GM12878 (cell line): ENCODE measurements at regions of chr13 and their contacts with region 1.

Region 1: DNA sequence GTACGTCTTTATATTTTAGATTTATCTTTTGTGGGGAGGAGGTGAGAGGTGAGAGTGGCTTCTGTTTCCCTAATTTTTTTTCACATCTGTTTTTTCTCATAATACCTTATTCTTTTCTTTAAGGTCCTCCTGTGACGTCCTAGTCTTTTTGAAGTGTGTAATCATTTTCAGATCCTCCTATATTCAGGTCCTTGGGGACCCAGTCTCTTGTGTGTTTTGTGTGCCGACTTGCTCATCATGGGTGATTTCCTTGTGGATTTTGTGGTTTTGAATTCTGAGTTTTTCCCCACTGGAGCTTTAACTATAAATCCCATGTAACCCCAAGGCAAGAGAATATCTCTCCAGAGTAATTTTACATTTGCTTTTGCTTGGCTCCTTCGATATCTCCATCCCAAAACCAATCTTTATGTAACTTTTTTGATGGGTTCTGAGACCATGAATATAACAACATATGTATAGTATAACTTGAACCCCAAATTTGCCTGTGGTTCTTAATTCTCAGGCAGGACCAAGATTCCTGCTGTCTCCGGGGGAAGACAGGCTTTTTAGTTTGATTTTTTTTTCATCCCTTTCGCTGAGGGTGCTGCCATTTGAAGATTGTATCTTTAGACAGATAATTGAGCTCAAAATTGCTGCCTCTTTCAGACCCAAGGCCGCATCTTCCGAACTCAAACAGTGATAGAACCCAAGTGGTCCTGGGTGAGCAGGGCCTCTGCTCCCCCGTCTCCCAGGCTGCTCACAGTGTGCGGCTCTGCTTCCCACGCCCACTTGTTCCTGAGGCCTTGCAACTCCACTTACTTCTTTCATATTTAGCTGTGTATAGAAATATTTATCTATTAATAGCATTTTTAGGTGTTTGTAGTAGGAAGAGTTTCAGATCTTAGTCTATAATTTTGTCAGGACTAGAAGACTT is 59.1 kb upstream of the GPR183 start:
- DNase-seq: peak; percentile 87
- ATAC-seq: peak; percentile 67
- H3K4me3 ChIP-seq: peak overlapping the region; percentile 23; the same call in 1 of the 2 replicates
- H3K27ac ChIP-seq: peak overlapping the region; percentile 93
- H3K4me1 ChIP-seq: peaks cover 54% of the 10 kb centered on the region
- H3K27me3 ChIP-seq: no peaks in the 10 kb centered on the region
- CTCF ChIP-seq: no peak
- EP300 ChIP-seq: peak; percentile 51 to 78; a peak in 1 of 4 replicates
- POLR2A ChIP-seq: 0 out of 2 replicates have a peak, but pooled peaks have one; percentile 19
- RAD21 ChIP-seq: peak; percentile 5; the same call in 1 of the 2 replicates

Region 2: GRCh38 chr13:99275093-99275469 is 91.2 kb before region 1 on chr13:
- CTCF ChIA-PET with region 1: interaction called, 440 read pairs
- POLR2A ChIA-PET with region 1: interaction called, 3 read pairs
- RAD21 ChIA-PET with region 1: interaction called, 80 read pairs
- SMC1A ChIA-PET with region 1: interaction called, 69 read pairs
- in situ Hi-C with region 1: no loop called
- intact Hi-C with region 1: no loop called
- DNase-seq: no peak
- ATAC-seq: peak; percentile 34
- H3K4me3 ChIP-seq: no peak overlapping the region
- H3K27ac ChIP-seq: no peak overlapping the region
- H3K4me1 ChIP-seq: peaks cover 40% of the 10 kb centered on the region
- H3K27me3 ChIP-seq: no peaks in the 10 kb centered on the region
- CTCF ChIP-seq: no peak
- EP300 ChIP-seq: no peak
- POLR2A ChIP-seq: no peak
- RAD21 ChIP-seq: no peak

Region 3: GRCh38 chr13:99288089-99288488 is 78.2 kb before region 1 on chr13:
- CTCF ChIA-PET with region 1: interaction called, 7 read pairs
- POLR2A ChIA-PET with region 1: interaction called, 11 read pairs
- RAD21 ChIA-PET with region 1: interaction called, 19 read pairs
- SMC1A ChIA-PET with region 1: interaction called, 21 read pairs
- in situ Hi-C with region 1: no loop called
- intact Hi-C with region 1: no loop called
- DNase-seq: peak; percentile 93
- ATAC-seq: peak; percentile 91
- H3K4me3 ChIP-seq: no peak overlapping the region
- H3K27ac ChIP-seq: peak overlapping the region; percentile 76
- H3K4me1 ChIP-seq: peaks cover 46% of the 10 kb centered on the region
- H3K27me3 ChIP-seq: no peaks in the 10 kb centered on the region
- CTCF ChIP-seq: no peak
- EP300 ChIP-seq: 0 out of 4 replicates have a peak, but pooled peaks of 1 of the 2 experiments have one; percentile 36
- POLR2A ChIP-seq: no peak
- RAD21 ChIP-seq: peak; percentile 22; the same call in 1 of the 2 replicates

Region 4: GRCh38 chr13:99301913-99302636 is 64.3 kb before region 1 on chr13:
- CTCF ChIA-PET with region 1: interaction called, 29 read pairs
- POLR2A ChIA-PET with region 1: interaction called, 59 read pairs
- RAD21 ChIA-PET with region 1: interaction called, 42 read pairs
- SMC1A ChIA-PET with region 1: interaction called, 85 read pairs
- in situ Hi-C with region 1: loop called (anchors 5 kb)
- intact Hi-C with region 1: loop called (anchors 1 kb)
- DNase-seq: no peak
- ATAC-seq: peak; percentile 39
- H3K4me3 ChIP-seq: peak overlapping the region; percentile 98
- H3K27ac ChIP-seq: peak overlapping the region; percentile 93
- H3K4me1 ChIP-seq: peaks cover 18% of the 10 kb centered on the region
- H3K27me3 ChIP-seq: no peaks in the 10 kb centered on the region
- CTCF ChIP-seq: no peak
- EP300 ChIP-seq: no peak
- POLR2A ChIP-seq: no peak
- RAD21 ChIP-seq: no peak

Region 5: GRCh38 chr13:99322297-99323103 is 43.8 kb before region 1 on chr13:
- CTCF ChIA-PET with region 1: interaction called, 3 read pairs
- POLR2A ChIA-PET with region 1: interaction called, 5 read pairs
- RAD21 ChIA-PET with region 1: interaction called, 14 read pairs
- SMC1A ChIA-PET with region 1: interaction called, 15 read pairs
- in situ Hi-C with region 1: no loop called
- intact Hi-C with region 1: no loop called
- DNase-seq: peak; percentile 85
- ATAC-seq: peak; percentile 92
- H3K4me3 ChIP-seq: peak overlapping the region; percentile 49
- H3K27ac ChIP-seq: peak overlapping the region; percentile 85
- H3K4me1 ChIP-seq: peaks cover 53% of the 10 kb centered on the region
- H3K27me3 ChIP-seq: no peaks in the 10 kb centered on the region
- CTCF ChIP-seq: no peak
- EP300 ChIP-seq: peak; percentile 55 to 84; a peak in 2 of 4 replicates
- POLR2A ChIP-seq: no peak
- RAD21 ChIP-seq: peak; percentile 21; the same call in 1 of the 2 replicates

Region 6: GRCh38 chr13:99380921-99381645 is 14.8 kb after region 1 on chr13:
- CTCF ChIA-PET with region 1: interaction called, 40 read pairs
- POLR2A ChIA-PET with region 1: interaction called, 28 read pairs
- RAD21 ChIA-PET with region 1: interaction called, 46 read pairs
- SMC1A ChIA-PET with region 1: interaction called, 148 read pairs
- in situ Hi-C with region 1: no loop called
- intact Hi-C with region 1: no loop called
- DNase-seq: peak; percentile 82
- ATAC-seq: peak; percentile 77
- H3K4me3 ChIP-seq: no peak overlapping the region
- H3K27ac ChIP-seq: peak overlapping the region; percentile 41
- H3K4me1 ChIP-seq: peaks cover 65% of the 10 kb centered on the region
- H3K27me3 ChIP-seq: no peaks in the 10 kb centered on the region
- CTCF ChIP-seq: no peak
- EP300 ChIP-seq: peak; percentile 58 to 59; a peak in 1 of 4 replicates
- POLR2A ChIP-seq: 0 out of 2 replicates have a peak, but pooled peaks have one; percentile 34
- RAD21 ChIP-seq: peak; percentile 31

Region 7: GRCh38 chr13:99425485-99426341 is 59.4 kb after region 1 on chr13:
- CTCF ChIA-PET with region 1: interaction called, 4 read pairs
- POLR2A ChIA-PET with region 1: interaction called, 5 read pairs
- RAD21 ChIA-PET with region 1: interaction called, 20 read pairs
- SMC1A ChIA-PET with region 1: interaction called, 32 read pairs
- in situ Hi-C with region 1: no loop called
- intact Hi-C with region 1: no loop called
- DNase-seq: peak; percentile 90
- ATAC-seq: peak; percentile 71
- H3K4me3 ChIP-seq: peak overlapping the region; percentile 10
- H3K27ac ChIP-seq: peak overlapping the region; percentile 100
- H3K4me1 ChIP-seq: peaks cover 62% of the 10 kb centered on the region
- H3K27me3 ChIP-seq: no peaks in the 10 kb centered on the region
- CTCF ChIP-seq: no peak
- EP300 ChIP-seq: peak; percentile 55 to 89; a peak in 3 of 4 replicates
- POLR2A ChIP-seq: no peak
- RAD21 ChIP-seq: peak; percentile 18; the same call in 1 of the 2 replicates